ENCODE measurements at regions of chr3 and their contacts with region 1.

Region 1: DNA sequence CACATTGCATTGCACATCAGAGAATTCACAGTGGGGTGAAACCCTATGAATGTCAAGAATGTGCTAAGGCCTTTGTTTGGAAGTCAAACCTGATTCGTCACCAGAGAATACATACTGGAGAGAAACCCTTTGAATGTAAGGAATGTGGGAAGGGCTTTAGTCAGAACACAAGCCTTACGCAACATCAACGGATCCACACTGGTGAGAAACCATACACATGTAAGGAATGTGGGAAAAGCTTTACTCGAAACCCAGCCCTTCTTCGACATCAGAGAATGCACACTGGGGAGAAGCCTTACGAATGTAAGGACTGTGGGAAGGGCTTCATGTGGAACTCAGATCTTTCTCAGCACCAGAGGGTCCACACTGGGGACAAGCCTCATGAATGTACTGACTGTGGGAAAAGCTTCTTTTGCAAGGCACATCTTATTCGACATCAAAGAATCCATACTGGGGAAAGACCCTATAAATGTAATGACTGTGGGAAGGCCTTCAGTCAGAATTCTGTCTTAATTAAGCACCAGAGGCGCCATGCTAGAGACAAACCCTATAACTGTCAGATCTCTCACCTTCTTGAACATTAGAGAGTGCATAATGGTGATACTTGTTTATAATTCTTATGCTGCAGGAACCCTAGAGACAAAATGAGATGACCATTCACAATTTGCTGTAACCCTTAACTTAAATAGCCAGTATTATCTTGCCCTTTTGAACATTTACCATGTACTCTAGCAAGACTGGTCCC is 9.0 kb downstream of the ZNF662 start:
- DNase-seq: no peak
- ATAC-seq: no peak
- H3K4me3 ChIP-seq: no peak overlapping the region
- H3K27ac ChIP-seq: no peak overlapping the region
- H3K4me1 ChIP-seq: no peaks in the 10 kb centered on the region
- H3K27me3 ChIP-seq: no peaks in the 10 kb centered on the region
- CTCF ChIP-seq: no peak

Region 2: GRCh38 chr3:41600616-41601015 is 1314.3 kb before region 1 on chr3:
- intact Hi-C with region 1: loop called in 1 of 2 experiments (anchors 5 kb)
- DNase-seq: no peak
- ATAC-seq: no peak
- H3K4me3 ChIP-seq: no peak overlapping the region
- H3K27ac ChIP-seq: no peak overlapping the region
- H3K4me1 ChIP-seq: no peaks in the 10 kb centered on the region
- H3K27me3 ChIP-seq: no peaks in the 10 kb centered on the region
- CTCF ChIP-seq: no peak

Measured in psoas muscle (tissue), 8 donors.